ENCODE measurements at regions of chr14 and their contacts with region 1.

Region 1: DNA sequence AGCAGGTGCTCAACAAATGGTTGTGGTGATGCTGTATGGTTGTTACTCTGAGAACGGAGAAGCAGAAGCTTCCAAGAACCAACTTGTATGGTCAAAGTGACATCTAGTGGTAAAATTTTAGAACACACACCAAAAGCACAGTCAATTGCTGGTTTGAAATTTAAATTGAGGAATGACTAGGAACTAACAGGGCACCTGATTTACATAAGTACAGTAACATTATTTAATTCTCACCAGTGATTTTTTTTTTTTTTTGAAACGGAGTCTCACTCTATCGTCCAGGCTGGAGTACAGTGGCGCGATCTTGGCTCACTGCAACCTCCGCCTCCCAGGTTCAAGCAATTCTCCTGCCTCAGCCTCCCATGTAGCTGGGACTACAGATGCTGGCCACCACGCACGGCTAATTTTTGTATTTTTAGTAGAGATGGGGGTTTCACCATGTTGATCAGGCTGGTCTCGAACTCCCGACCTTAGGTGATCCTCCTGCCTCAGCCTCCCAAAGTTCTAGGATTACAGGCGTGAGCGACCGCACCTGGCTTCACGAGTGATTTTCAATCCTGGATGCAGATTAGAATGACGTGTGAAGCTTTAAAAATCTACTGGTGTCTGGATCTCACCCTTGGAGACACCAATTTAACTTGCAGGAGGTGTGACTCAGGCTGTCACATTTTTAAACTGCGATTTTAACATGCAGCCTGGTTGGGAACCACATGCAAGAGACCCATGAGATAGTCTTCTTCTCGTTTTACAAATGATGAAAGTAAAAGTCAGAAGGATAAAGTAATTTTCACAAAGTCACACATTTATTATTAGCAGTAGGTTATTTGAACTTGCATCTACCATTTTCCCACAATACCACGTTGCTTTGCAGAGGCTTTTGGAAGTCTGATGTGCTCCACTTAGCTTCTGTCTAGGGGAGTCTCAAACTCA is 14.1 kb upstream of the NUMB start:
- DNase-seq: peak; percentile 22 to 73
- H3K4me3 ChIP-seq: no peak overlapping the region
- H3K4me1 ChIP-seq: no peaks in the 10 kb centered on the region
- H3K27me3 ChIP-seq: no peaks in the 10 kb centered on the region

Region 2: GRCh38 chr14:73173092-73173735 is 299.2 kb before region 1 on chr14:
- in situ Hi-C with region 1: loop called (anchors 10 kb)
- DNase-seq: peak in 1 of 2 experiments; percentile 59
- H3K4me3 ChIP-seq: no peak overlapping the region
- H3K4me1 ChIP-seq: peaks cover 19% of the 10 kb centered on the region
- H3K27me3 ChIP-seq: no peaks in the 10 kb centered on the region

Region 3: DNA sequence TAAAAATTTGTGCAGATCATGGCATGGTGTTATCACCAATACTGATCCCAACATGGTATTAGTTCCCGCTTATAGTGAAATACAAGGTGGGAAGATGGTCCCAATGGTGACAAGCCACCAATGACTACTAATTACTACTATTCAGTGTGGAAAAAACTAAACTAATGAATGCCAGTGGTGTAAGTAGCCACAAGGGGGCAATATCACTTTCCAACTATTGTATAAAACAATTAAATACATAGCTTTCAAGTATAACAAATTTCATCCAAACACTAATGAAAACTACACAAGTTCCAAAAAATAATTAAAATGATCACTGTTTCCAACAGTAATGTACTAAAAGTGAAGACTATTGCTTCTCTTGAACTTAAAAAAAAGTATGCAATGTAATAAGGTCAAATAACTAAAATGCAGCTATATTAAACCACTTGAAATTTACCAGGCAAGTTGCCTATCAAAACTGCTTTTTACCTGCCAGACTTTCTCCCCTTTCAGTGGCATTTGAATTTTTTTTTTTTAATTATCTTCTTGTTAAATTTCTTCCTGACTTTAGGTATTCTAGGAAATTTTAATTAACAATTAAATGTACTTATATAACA is 177.2 kb before region 1 on chr14:
- in situ Hi-C with region 1: loop called (anchors 5 kb)
- DNase-seq: peak; percentile 27 to 51
- H3K4me3 ChIP-seq: no peak overlapping the region
- H3K4me1 ChIP-seq: 0 out of 2 replicates have a peak, but pooled peaks cover 2% of the 10 kb centered on the region
- H3K27me3 ChIP-seq: no peaks in the 10 kb centered on the region

Region 4: GRCh38 chr14:74035556-74035955 is 563.1 kb after region 1 on chr14:
- in situ Hi-C with region 1: no loop called
- DNase-seq: no peak
- H3K4me3 ChIP-seq: no peak overlapping the region
- H3K4me1 ChIP-seq: no peaks in the 10 kb centered on the region
- H3K27me3 ChIP-seq: no peaks in the 10 kb centered on the region